ENCODE measurements at regions of chr4 and their contacts with region 1.

Region 1: DNA sequence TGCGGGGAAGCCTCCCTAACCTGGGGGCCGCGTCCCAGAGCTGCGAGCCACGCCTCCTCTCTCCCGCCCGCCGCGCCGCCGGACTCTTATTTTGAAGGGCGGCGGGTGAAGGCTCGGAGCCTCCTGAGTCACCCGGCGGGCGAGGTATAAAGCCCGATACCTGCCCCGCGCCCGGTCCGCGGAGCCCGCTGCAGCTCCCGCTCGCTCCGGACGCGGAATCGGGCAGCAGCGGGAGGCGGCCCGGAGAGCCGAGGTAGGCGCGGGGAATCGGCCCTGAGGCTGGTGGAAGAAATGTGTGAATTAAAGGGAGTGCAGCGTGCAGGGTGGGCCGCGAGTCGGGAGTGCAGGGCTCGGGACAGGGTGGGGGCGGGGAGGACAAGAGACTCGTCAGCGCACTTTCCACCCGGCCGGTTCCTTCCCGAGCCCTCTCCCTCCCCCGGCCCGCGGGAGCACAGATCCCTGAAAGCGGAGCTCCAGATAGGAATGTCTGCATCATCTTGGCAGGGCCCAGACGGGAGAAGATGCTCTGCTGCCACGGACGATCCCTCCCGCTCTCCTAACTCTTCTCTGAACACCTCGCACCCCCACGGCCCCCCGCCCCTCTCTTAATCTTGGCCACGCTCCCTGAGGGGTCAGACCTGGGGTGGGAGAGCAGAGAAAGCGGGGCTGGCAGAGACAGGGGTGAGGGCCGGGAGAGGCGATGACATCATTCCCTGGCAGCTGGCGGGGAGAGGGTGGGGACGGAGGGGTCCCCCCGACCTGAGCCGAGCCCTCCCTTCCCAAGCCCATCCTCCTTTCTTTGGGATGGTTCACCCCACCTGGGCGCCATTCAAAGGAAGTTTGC is 177.9 kb downstream of the CBR4 start:
- DNase-seq: peak; percentile 71
- H3K4me3 Mint-ChIP-seq: peak overlapping the region; percentile 77
- H3K27ac Mint-ChIP-seq: peak overlapping the region; percentile 24
- H3K4me1 Mint-ChIP-seq: peaks cover 18% of the 10 kb centered on the region
- H3K27me3 Mint-ChIP-seq: peaks cover 53% of the 10 kb centered on the region

Region 2: DNA sequence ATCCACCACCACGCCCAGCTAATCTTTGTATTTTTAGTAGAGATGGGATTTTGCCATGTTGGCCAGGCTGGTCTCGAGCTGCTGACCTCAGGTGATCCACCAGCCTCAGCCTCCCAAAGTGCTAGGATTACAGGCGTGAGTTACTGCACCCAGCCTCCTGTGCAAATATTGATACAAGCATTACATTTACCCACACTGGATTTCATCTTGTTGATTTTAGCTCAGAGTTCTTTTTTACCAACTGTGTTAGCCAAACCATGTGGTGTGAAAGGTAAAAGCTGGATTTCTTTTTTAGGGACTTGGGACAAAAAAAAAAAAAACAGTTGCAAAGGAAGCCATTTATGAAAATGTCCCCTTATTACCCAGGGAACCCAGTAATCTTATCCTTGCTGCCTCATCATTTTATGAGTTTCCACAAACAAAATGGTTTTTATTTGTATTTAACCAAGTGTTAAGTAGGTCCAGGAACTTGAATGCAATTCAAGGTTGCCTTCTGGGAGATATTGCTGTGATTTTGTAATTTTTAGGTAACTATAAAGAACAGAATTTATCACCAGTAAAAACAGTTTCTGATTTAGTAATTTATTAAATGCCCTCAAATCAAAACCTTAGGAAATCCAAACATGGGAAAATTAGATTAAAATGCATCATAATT is 132.8 kb before region 1 on chr4:
- CTCF ChIA-PET with region 1: no interaction called
- POLR2A ChIA-PET with region 1: no interaction called
- DNase-seq: no peak
- H3K4me3 Mint-ChIP-seq: no peak overlapping the region
- H3K27ac Mint-ChIP-seq: no peak overlapping the region
- H3K4me1 Mint-ChIP-seq: no peaks in the 10 kb centered on the region
- H3K27me3 Mint-ChIP-seq: peaks cover 11% of the 10 kb centered on the region

Region 3: DNA sequence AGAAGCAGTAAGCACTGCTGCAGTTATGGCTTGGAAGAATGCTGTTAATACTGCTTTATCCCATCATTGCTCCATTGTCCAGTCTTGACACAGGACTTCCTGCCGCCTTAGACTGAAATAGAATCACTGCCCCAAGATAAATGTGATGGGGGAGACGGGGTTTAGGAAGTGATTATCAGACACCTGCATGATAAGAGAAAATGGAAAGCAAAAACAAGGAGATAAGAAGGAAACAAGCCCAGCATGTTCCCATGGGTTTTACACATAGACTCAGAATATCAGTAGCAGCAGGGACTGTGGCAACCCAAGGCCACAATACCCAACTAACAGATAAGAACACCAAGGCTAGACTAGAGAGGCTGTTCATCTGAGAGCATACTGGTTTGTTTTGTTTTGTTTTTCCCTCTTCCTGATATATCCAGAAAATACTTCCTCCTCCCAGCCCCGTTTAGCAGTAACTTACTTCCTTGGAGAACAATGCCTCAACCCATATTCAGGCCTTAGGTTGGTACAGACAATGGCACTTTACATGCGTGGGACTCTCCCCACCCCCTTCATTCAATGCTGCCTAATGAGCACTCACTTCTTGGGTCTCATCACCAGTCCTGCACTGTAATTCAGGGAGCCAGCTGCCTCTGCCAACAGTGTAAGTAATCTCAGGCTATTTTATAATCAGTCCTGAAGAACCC is 54.7 kb before region 1 on chr4:
- CTCF ChIA-PET with region 1: no interaction called
- POLR2A ChIA-PET with region 1: no interaction called
- DNase-seq: no peak
- H3K4me3 Mint-ChIP-seq: no peak overlapping the region
- H3K27ac Mint-ChIP-seq: no peak overlapping the region
- H3K4me1 Mint-ChIP-seq: no peaks in the 10 kb centered on the region
- H3K27me3 Mint-ChIP-seq: peaks cover 19% of the 10 kb centered on the region

Region 4: GRCh38 chr4:168787801-168788595 is 44.1 kb before region 1 on chr4:
- CTCF ChIA-PET with region 1: no interaction called
- POLR2A ChIA-PET with region 1: no interaction called
- DNase-seq: no peak
- H3K4me3 Mint-ChIP-seq: no peak overlapping the region
- H3K27ac Mint-ChIP-seq: no peak overlapping the region
- H3K4me1 Mint-ChIP-seq: no peaks in the 10 kb centered on the region
- H3K27me3 Mint-ChIP-seq: peaks cover 15% of the 10 kb centered on the region

Region 5: DNA sequence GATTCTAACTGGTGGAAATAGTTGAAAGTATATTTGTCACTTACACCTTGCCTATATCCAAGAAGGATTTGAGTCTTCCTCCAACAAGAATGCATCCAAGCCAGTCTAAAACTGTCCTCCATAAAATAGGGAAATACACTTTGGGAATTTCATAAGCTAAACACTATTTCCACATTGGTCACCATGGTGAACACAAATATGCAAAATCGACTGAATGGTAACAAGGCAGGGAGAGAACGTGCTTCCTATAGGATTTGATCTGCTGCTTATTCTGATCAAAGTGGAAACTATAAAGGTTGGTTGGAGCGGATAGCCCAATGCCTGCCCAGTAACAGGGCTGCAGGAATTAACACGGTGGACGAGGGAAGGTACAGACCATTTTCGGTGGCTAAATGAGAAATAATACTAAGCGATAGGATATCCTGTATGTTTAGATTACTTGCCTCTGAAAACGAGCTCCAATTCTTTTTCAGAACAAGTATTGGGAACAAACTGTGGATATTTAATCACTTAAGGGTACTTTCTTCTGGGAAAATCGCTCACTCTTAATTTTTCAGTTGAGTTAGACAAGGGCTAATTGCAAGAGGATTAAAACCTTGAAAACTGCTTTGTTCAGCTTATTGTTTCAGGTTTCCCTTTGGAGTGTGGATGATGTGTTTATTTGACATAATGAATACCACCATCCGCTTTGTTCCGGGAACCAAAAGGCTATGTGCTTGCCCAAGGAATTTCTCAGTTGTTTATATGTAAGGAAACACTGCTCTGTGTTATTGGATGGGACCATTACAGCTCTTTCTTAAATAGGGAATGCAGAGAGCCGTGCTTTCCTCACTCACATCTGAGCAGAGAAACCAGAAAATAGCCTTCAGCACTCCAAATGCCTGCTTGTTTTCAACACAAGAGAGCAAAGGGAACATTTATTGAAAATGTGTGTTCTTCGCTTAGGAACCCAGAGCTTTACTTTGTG is 16.5 kb before region 1 on chr4:
- CTCF ChIA-PET with region 1: no interaction called
- POLR2A ChIA-PET with region 1: interaction called, 14 read pairs
- DNase-seq: no peak
- H3K4me3 Mint-ChIP-seq: no peak overlapping the region
- H3K27ac Mint-ChIP-seq: no peak overlapping the region
- H3K4me1 Mint-ChIP-seq: peaks cover 6% of the 10 kb centered on the region
- H3K27me3 Mint-ChIP-seq: peaks cover 41% of the 10 kb centered on the region